H1 (cell line): ENCODE measurements at regions of chr11 and their contacts with region 1.

Region 1: DNA sequence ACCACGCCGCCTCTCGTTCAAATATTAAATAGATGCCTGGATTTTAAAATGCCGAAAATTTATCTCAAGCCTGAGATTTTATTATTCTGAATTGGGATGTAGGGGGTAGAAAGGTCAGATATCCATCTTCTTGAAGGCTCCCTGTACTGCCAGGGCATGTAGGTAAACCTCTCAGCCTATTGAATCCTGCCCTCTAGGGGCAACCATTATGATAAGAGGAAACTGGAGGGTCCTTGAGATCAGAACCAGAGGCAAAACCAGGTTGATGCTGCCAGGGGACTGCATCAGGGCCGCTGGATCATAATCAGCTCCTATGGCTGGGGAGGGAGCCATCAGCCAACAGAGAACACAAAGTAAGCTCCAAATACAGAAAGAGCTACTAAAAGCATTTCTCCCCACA is 92.4 kb downstream of the KCNC1 start:
- DNase-seq: no peak
- H3K4me3 ChIP-seq: no peak overlapping the region
- H3K27ac ChIP-seq: no peak overlapping the region
- H3K4me1 ChIP-seq: 0 out of 7 replicates have a peak, but pooled peaks cover 0 to 2% (median 0%) of the 10 kb centered on the region in 4 experiments
- H3K27me3 ChIP-seq: no peaks in the 10 kb centered on the region
- CTCF ChIP-seq: peak in 2 of 3 experiments; percentile 64 to 72; a peak in 3 of 4 replicates
- EP300 ChIP-seq: no peak
- POLR2A ChIP-seq: no peak
- RAD21 ChIP-seq: peak; percentile 72 to 84

Region 2: GRCh38 chr11:17650127-17650911 is 176.7 kb before region 1 on chr11:
- CTCF ChIA-PET with region 1: no interaction called
- POLR2A ChIA-PET with region 1: no interaction called
- DNase-seq: no peak
- H3K4me3 ChIP-seq: no peak overlapping the region
- H3K27ac ChIP-seq: no peak overlapping the region
- H3K4me1 ChIP-seq: peaks cover 3 to 9% (median 7%) of the 10 kb centered on the region in 4 experiments; a peak in 6 of 7 replicates
- H3K27me3 ChIP-seq: peaks cover 0 to 9% (median 3%) of the 10 kb centered on the region in 4 experiments; a peak in 3 of 7 replicates
- CTCF ChIP-seq: no peak
- EP300 ChIP-seq: no peak
- POLR2A ChIP-seq: no peak
- RAD21 ChIP-seq: no peak

Region 3: DNA sequence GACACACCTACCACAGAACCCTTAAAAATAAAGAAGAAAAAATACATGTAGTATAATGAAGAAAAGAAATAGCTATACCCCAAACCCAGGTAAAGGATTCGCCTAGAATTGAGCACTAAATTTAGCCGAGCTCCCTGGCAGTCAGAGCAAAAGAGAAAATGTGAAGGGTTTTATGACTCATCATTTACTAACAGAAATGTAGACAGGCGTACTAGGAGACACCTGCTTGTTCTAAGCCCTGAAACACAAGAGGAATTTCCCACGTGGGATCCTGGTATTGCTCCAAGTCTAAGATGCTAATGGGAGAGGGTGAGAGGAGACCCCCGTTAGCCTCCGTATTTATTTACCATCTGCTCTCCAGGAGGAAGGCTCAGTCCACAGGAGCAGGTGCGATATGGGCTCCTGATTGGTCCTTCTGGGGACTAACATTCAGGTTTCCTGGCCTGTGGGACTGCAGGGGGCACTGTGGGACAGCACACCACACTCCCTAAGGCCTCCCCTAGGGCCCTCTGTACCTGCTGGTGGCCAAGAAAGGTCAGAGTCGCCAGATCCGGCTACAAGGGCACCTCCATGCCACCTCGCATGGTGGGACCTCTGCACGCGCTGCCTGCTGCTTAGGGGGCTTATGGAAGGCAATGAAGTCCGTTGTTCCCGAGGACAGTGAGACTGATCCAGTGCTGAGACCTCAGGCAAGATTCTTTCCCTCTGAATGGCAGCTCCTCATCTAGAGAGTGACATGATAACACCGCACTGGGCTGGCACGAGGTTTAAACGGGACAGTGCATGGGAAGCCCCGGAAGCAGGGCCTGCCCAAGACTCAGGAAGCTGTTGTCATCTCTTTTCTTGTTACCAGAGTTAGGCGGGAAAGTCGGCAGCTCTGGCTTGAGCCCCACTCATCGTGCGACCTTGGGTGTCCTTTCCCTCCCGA is 66.6 kb before region 1 on chr11:
- CTCF ChIA-PET with region 1: interaction called, 16 read pairs
- POLR2A ChIA-PET with region 1: no interaction called
- DNase-seq: peak; percentile 77 to 84
- H3K4me3 ChIP-seq: no peak overlapping the region
- H3K27ac ChIP-seq: no peak overlapping the region
- H3K4me1 ChIP-seq: peaks cover 0 to 7% (median 1%) of the 10 kb centered on the region in 4 experiments; a peak in 3 of 7 replicates
- H3K27me3 ChIP-seq: no peaks in the 10 kb centered on the region
- CTCF ChIP-seq: peak; percentile 89 to 97 (median 91)
- EP300 ChIP-seq: no peak
- POLR2A ChIP-seq: no peak
- RAD21 ChIP-seq: peak; percentile 95 to 96

Region 4: DNA sequence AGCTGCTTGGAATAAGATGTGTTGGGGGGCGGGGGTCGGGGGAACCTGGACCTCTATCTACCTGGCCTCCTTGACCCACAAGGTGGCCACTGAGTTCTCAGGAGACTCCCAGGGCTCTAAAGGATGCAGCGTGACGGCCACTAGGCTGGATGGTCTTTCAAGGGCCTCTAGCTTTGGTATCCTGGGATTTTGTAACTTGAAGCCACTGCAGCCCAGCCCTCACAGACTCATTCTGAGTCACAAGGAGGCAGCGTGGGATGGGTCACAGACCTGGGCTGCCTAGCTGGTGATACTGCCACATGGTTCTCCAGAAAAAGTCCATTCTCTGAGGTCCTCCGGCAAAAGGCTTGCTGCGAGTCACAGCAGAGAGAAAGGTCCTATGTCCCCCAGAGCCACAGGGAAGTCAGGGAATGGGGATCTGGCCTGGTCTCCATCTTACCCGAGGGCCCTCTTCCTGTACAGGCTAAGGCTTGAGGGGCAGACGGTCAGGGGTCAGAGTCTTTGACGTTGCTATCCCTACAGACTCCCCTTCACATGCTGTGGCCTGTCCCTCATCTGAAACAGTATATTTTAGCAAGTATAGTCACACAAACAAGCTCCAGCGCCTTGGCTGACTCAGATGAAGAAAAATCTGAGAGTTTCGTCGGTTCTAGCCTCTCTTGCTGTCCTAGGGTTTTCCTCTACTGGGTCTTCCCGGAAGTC is 40.0 kb before region 1 on chr11:
- CTCF ChIA-PET with region 1: interaction called, 14 read pairs
- POLR2A ChIA-PET with region 1: no interaction called
- DNase-seq: no peak
- H3K4me3 ChIP-seq: no peak overlapping the region
- H3K27ac ChIP-seq: no peak overlapping the region
- H3K4me1 ChIP-seq: peaks cover 0 to 2% (median 0%) of the 10 kb centered on the region in 4 experiments; a peak in 1 of 7 replicates
- H3K27me3 ChIP-seq: no peaks in the 10 kb centered on the region
- CTCF ChIP-seq: 0 out of 4 replicates have a peak, but pooled peaks of 1 of the 3 experiments have one; percentile 11
- EP300 ChIP-seq: no peak
- POLR2A ChIP-seq: no peak
- RAD21 ChIP-seq: peak in 1 of 2 experiments; percentile 12; a peak in 3 of 4 replicates

Region 5: GRCh38 chr11:17810746-17811145 is 16.3 kb before region 1 on chr11:
- CTCF ChIA-PET with region 1: interaction called, 79 read pairs
- POLR2A ChIA-PET with region 1: no interaction called
- DNase-seq: no peak
- H3K4me3 ChIP-seq: no peak overlapping the region
- H3K27ac ChIP-seq: no peak overlapping the region
- H3K4me1 ChIP-seq: no peaks in the 10 kb centered on the region
- H3K27me3 ChIP-seq: no peaks in the 10 kb centered on the region; a peak in 1 of 7 replicates
- CTCF ChIP-seq: no peak
- EP300 ChIP-seq: no peak
- POLR2A ChIP-seq: no peak
- RAD21 ChIP-seq: no peak

Region 6: DNA sequence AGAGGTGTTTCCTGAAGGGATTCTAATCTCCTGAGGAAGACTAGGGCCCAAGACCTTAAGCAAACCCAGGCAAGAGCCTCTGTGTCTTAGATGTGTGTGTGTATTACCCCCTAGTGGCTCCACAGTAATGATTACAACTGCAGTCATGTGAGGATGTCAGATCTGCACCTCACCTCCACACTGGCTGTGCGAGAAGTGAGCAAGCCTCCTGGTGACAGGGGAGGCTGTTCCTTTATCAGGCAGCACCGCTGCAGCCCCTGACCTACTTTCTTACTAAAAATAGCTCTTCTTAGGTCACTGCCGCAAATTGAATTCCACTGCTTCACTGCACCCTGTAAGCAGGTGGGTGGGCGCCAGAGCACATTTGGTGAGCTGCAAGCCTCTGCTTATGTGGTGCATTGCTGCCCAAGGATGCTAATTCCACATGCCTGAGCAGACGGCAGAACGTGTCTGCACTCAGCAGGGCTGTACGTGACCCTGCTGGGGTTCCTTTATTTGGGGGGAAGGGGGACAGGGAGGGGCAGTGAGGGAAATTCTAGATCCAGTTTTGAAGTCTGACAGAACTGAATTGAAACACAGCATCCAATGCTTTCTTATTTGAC is 19.9 kb after region 1 on chr11:
- CTCF ChIA-PET with region 1: interaction called, 23 read pairs
- POLR2A ChIA-PET with region 1: no interaction called
- DNase-seq: no peak
- H3K4me3 ChIP-seq: no peak overlapping the region
- H3K27ac ChIP-seq: no peak overlapping the region
- H3K4me1 ChIP-seq: peaks cover 0 to 4% (median under 1%) of the 10 kb centered on the region in 4 experiments; a peak in 3 of 7 replicates
- H3K27me3 ChIP-seq: no peaks in the 10 kb centered on the region
- CTCF ChIP-seq: peak in 1 of 3 experiments; percentile 14; a peak in 1 of 4 replicates
- EP300 ChIP-seq: no peak
- POLR2A ChIP-seq: no peak
- RAD21 ChIP-seq: peak; percentile 17 to 44; a peak in 1 of 4 replicates

Region 7: DNA sequence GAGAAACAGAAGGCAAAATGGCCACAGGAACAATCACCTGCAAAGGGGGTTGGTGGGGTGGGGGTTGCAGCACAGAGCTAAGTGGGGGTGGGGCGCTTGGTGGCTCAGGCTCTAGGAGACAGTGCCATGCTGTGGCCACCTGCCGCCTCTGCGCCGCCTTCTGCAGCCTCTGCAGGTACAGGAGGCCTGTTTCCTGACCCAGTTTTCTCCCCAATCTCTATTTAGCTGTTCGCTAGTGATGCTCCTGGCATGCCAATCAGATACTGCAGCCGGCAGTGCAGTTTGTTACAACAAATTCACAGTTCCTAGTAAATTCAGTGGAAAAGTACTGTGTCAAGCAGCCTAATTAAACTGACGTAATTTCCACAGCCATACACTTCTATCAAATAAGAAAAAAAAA is 79.4 kb after region 1 on chr11:
- CTCF ChIA-PET with region 1: interaction called, 10 read pairs
- POLR2A ChIA-PET with region 1: no interaction called
- DNase-seq: peak; percentile 70 to 73
- H3K4me3 ChIP-seq: peak overlapping the region in 1 of 4 experiments; percentile 20; a peak in 1 of 8 replicates
- H3K27ac ChIP-seq: no peak overlapping the region
- H3K4me1 ChIP-seq: peaks cover 4 to 10% (median 6%) of the 10 kb centered on the region in 4 experiments; a peak in 6 of 7 replicates
- H3K27me3 ChIP-seq: no peaks in the 10 kb centered on the region
- CTCF ChIP-seq: peak; percentile 62 to 86 (median 67)
- EP300 ChIP-seq: no peak
- POLR2A ChIP-seq: no peak
- RAD21 ChIP-seq: peak; percentile 74 to 79

Region 8: DNA sequence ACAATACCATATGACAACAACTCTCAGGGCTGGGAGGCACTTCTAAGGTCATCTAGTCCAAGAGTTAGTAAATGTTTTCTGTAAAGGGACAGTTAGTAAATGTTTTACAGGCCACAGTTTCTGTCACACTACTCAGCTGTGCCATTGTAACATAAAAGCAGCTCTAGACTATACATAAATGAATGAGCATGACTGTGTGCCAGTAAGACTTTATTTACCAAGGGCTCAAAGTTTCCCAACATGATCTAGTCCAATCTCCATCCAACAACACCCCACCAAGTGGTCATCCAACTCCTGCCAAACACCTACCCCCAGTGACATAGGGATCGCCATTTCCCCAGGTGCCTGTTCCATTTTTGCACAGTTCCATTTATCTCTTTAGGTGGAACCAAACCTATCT is 173.8 kb after region 1 on chr11:
- CTCF ChIA-PET with region 1: no interaction called
- POLR2A ChIA-PET with region 1: no interaction called
- DNase-seq: no peak
- H3K4me3 ChIP-seq: no peak overlapping the region
- H3K27ac ChIP-seq: no peak overlapping the region
- H3K4me1 ChIP-seq: no peaks in the 10 kb centered on the region
- H3K27me3 ChIP-seq: no peaks in the 10 kb centered on the region
- CTCF ChIP-seq: no peak
- EP300 ChIP-seq: no peak
- POLR2A ChIP-seq: no peak
- RAD21 ChIP-seq: no peak

Region 9: GRCh38 chr11:18172666-18173065 is 345.7 kb after region 1 on chr11 and contains the start of gene MRGPRX4:
- CTCF ChIA-PET with region 1: no interaction called
- POLR2A ChIA-PET with region 1: no interaction called
- DNase-seq: no peak
- H3K4me3 ChIP-seq: no peak within 1 kb of the TSS
- H3K27ac ChIP-seq: no peak within 1 kb of the TSS; the same call in 1 of the 2 replicates
- H3K4me1 ChIP-seq: no peaks in the 10 kb centered on the region
- H3K27me3 ChIP-seq: no peaks in the 10 kb centered on the region
- CTCF ChIP-seq: no peak
- EP300 ChIP-seq: no peak
- POLR2A ChIP-seq: no peak
- RAD21 ChIP-seq: no peak
- total RNA-seq, gene MRGPRX4: not detected in 2 replicates